ENCODE measurements at regions of chr5 and their contacts with region 1.

Region 1: DNA sequence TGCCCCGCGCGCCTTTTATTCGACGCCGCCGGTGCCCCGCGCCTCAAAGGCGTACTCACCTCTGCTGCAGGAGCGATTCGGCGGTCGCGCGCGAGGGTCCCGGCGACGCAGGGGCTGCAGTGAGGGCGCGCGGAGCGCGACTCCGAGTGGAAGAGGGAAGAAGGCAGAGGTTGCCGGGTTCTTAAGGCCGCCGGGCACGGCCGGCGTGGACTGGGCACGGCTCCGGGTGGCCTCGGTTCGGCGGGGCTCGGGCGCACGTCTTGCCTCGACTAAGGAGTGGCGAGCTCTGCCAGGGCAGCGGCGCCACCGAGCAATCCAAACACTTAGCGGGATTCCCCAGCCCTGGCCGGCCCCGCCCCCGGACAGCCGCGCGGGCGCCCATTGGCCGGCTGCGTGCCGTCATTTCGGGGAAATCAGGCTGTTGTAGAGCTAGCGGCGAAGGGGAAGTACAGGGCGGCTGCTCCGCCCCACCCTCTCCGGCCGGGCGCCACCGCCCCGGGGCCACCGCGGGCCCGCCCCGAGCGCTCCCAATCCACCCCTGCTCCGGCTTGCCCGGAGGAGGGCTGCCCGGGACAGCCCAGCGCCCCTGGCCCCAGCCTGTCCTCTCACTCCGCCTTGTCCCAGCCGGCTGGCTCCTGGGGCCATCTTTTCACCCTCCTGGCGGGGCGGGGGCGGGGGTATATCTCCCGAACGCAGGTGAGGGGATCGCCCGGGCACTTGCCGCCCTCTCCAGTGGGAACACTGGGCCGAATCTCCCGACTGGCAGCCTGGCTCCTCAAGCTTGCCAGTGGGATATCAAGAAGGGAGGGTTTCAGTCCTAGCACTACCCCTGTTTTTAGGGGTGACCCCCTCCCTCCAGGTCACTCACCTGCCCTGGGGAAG is at the start of gene IRF1:
- DNase-seq: peak; percentile 82
- H3K4me3 ChIP-seq: peak within 1 kb of the TSS; percentile 75
- H3K27me3 ChIP-seq: no peaks in the 10 kb centered on the region
- CTCF ChIP-seq: no peak
- polyA plus RNA-seq, gene IRF1: 17.9 and 25.5 TPM in 2 replicates

Region 2: GRCh38 chr5:132419502-132420468 is 70.9 kb before region 1 on chr5:
- CTCF ChIA-PET with region 1: interaction called, 77 read pairs
- POLR2A ChIA-PET with region 1: no interaction called
- DNase-seq: no peak
- H3K4me3 ChIP-seq: no peak overlapping the region
- H3K27me3 ChIP-seq: no peaks in the 10 kb centered on the region
- CTCF ChIP-seq: peak; percentile 85

Region 3: DNA sequence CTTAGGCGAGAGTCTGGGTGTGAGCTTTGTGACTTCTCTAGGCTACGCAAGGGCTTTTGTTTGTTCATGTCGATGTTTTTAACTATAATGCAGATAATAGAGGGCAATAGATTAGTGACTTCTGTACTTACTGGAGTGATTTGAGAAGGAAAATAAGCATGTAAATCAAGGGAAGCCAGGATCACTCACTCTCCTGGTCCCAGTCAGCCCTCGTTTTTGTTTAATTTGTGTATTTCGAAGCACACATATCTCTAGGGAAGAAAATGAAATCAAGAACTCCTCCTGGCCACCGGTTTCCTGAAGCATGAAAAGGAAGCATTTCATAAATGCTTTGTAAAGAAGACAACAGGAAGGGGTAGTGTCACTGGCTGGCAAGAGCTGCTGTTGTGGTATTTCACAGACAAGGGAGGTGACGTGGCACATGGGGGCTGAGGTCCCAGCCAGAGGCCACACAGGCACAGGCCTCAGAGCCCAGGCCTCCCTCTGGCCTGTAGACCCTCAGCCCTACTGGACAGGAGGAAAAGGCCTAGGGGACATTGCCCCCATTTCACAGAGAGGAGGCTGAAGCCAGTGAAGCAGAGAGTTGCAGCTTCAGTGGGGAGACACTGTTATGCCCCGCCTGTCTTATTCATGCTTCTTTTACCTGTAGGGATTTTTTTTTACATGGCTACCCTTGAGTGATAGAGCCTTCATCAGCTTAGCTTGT is 34.3 kb before region 1 on chr5:
- CTCF ChIA-PET with region 1: interaction called, 8 read pairs
- POLR2A ChIA-PET with region 1: interaction called, 10 read pairs
- DNase-seq: no peak
- H3K4me3 ChIP-seq: no peak overlapping the region
- H3K27me3 ChIP-seq: no peaks in the 10 kb centered on the region
- CTCF ChIP-seq: no peak

Region 4: DNA sequence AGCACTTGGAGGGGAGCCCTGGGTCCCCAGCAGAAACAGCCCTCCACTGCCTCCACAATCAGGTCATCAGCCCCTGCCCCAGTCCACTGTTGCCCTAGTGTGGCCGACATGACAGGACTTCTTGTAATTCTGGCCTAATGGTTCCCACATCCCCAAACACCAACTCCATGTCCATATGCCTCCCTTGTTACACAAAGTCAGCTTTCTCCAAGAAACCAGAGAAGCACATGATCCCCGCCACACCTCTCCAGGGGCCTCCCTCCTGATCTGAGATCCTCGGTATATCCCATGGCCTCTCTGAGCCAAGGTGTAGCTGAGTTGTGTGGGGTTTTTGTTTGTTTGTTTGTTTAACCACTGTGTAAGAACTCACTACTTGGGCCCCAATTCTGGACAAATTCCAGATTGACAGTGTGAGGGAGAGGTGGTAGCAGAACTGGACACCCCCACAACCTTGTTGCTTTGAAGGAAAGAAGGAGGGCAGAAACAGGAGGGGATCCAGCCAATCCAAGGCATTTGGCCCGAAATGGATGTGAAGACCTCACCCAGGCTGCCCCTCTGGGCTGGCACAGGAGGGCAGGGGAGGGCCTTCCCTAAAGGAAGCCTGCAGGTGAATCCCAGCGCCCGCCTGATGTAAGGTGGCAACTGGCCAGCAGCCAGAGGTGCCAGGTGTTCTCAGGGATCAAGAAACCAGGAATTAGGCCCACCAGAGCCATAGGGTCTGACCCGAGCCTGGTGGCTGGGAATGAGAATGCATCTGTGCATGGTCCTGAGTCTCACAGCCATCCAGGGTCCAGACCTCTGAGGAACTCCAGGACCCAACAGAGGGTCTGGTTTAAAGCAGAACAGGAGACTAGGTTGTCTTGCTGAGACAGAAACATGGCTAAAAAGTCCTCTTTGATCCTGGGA is 13.6 kb before region 1 on chr5:
- CTCF ChIA-PET with region 1: interaction called, 23 read pairs
- POLR2A ChIA-PET with region 1: interaction called, 6 read pairs
- DNase-seq: no peak
- H3K4me3 ChIP-seq: no peak overlapping the region
- H3K27me3 ChIP-seq: no peaks in the 10 kb centered on the region
- CTCF ChIP-seq: no peak

Measured in BJ (cell line).